SK-N-SH (cell line): ENCODE measurements at regions of chr19 and their contacts with region 1.

Region 1: DNA sequence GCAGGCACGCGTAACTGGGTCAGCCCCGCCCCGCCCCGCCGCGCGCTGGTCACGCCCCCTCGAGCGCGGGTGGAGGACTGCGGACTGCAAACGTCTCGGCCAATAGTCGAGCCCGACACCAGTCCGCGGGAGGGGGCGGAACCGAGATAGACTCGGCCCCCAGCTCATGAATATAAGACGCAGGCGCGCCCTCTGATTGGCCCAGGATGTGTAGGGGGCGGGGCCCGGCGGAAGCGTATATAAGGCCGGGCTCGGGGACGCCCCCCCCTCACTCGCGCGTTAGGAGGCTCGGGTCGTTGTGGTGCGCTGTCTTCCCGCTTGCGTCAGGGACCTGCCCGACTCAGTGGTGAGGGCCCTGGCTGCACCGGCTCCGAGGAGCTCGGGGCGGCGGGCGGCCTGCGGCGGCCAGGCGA is at the start of gene CIRBP:
- DNase-seq: peak; percentile 97
- H3K4me3 ChIP-seq: peak within 1 kb of the TSS; percentile 78 to 86
- H3K27ac ChIP-seq: peak within 1 kb of the TSS; percentile 91 to 98
- H3K4me1 ChIP-seq: peaks cover 47 to 62% of the 10 kb centered on the region in 2 experiments; a peak in 3 of 4 replicates
- H3K27me3 ChIP-seq: no peaks in the 10 kb centered on the region
- CTCF ChIP-seq: no peak
- EP300 ChIP-seq: no peak
- RAD21 ChIP-seq: no peak
- polyA plus RNA-seq, gene CIRBP: 762 and 857 TPM in 2 replicates

Region 2: GRCh38 chr19:1064661-1065605 is 204.1 kb before region 1 on chr19:
- CTCF ChIA-PET with region 1: no interaction called
- POLR2A ChIA-PET with region 1: no interaction called
- DNase-seq: peak; percentile 88
- H3K4me3 ChIP-seq: no peak overlapping the region
- H3K27ac ChIP-seq: no peak overlapping the region
- H3K4me1 ChIP-seq: peaks cover 0 to 20% of the 10 kb centered on the region in 2 experiments; a peak in 1 of 4 replicates
- H3K27me3 ChIP-seq: peaks cover 26% of the 10 kb centered on the region
- CTCF ChIP-seq: peak; percentile 55
- EP300 ChIP-seq: no peak
- RAD21 ChIP-seq: peak; percentile 42

Region 3: GRCh38 chr19:1223018-1223855 is 45.8 kb before region 1 on chr19:
- CTCF ChIA-PET with region 1: interaction called, 12 read pairs
- POLR2A ChIA-PET with region 1: interaction called, 4 read pairs
- DNase-seq: peak; percentile 76
- H3K4me3 ChIP-seq: no peak overlapping the region; a peak in 1 of 4 replicates
- H3K27ac ChIP-seq: no peak overlapping the region; a peak in 1 of 4 replicates
- H3K4me1 ChIP-seq: peaks cover 0 to 5% of the 10 kb centered on the region in 2 experiments; a peak in 1 of 4 replicates
- H3K27me3 ChIP-seq: no peaks in the 10 kb centered on the region
- CTCF ChIP-seq: peak; percentile 61
- EP300 ChIP-seq: no peak
- RAD21 ChIP-seq: peak; percentile 39; the same call in 1 of the 2 replicates

Region 4: GRCh38 chr19:1249298-1249989 is 19.6 kb before region 1 on chr19:
- CTCF ChIA-PET with region 1: interaction called, 594 read pairs
- POLR2A ChIA-PET with region 1: interaction called, 110 read pairs
- DNase-seq: peak; percentile 92
- H3K4me3 ChIP-seq: peak overlapping the region; percentile 79 to 88
- H3K27ac ChIP-seq: peak overlapping the region; percentile 95 to 96
- H3K4me1 ChIP-seq: peaks cover 15 to 38% of the 10 kb centered on the region in 2 experiments; a peak in 3 of 4 replicates
- H3K27me3 ChIP-seq: no peaks in the 10 kb centered on the region
- CTCF ChIP-seq: no peak
- EP300 ChIP-seq: no peak
- RAD21 ChIP-seq: no peak

Region 5: DNA sequence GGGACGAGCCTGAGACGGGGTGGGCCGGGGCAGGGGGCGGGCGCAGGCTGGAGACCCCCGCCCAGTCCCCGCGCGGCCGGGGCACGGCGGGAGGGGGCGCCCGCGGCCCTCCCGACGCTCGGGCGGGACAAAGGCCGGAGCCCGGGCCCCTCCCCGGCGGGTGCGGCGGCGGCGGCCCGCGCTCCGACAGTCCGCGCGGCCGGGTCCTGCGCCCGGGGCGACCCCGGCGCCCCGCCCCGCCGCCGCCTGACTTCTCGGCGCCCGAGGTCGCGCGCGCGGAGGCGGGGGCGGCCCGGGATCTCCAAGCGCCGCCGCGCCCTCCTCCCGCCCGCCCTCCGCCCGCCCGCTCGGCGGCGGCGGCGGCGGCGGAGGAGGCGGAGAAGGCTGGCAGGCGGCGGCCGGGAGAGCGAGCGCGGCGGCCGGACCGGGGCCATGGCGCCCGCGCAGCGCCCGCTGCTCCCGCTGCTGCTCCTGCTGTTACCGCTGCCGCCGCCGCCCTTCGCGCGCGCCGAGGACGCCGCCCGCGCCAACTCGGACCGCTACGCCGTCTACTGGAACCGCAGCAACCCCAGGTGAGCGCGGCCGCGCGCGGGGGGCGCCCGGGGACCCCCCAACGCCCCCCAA is 16.8 kb after region 1 on chr19 and contains the start of gene EFNA2:
- CTCF ChIA-PET with region 1: interaction called, 26 read pairs
- POLR2A ChIA-PET with region 1: interaction called, 10 read pairs
- DNase-seq: peak; percentile 84
- H3K4me3 ChIP-seq: peak within 1 kb of the TSS; percentile 57 to 63
- H3K27ac ChIP-seq: no peak within 1 kb of the TSS; a peak in 1 of 4 replicates
- H3K4me1 ChIP-seq: peaks cover 0 to 8% of the 10 kb centered on the region in 2 experiments; a peak in 1 of 4 replicates
- H3K27me3 ChIP-seq: no peaks in the 10 kb centered on the region
- CTCF ChIP-seq: peak; percentile 1; the same call in 1 of the 2 replicates
- EP300 ChIP-seq: no peak
- RAD21 ChIP-seq: no peak
- polyA plus RNA-seq, gene EFNA2: 0.67 and 1.1 TPM in 2 replicates

Region 6: DNA sequence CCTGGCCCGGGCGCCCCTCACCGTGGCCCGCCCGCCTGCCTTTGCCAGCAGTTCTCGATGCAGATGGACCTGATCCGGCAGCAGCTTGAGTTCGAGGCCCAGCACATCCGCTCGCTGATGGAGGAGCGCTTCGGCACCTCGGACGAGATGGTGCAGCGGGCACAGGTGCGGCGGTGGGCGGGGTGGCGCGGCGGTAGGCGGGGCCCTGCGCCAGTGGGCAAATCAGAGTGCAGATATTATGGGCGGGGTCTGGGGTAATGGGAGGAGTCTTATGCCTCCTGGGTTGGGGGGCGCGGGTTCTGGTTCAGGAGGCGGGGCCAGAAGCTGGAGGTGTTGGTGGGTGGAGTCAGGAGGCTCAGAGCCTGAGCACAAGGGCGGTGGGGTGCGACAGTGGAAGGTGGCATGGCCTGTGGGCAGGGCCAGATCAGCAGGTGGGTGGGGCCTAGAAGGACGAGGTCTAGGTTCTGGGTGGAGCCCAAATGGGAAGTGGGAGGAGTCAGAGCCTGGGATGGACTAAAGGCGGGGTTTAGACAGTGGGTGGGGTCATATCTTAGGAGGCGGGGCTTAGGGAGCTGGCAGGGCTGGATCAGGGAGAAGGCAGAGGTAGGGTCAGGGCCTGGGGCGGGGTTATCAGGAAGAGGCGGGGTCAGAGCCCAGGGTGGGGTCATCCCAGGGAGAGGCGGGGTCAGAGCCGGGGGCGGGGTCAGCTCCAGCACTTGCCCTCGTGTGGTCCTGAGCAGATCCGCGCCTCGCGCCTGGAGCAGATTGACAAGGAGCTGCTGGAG is 186.5 kb after region 1 on chr19:
- CTCF ChIA-PET with region 1: interaction called, 6 read pairs
- POLR2A ChIA-PET with region 1: interaction called, 10 read pairs
- DNase-seq: peak; percentile 94
- H3K4me3 ChIP-seq: no peak overlapping the region
- H3K27ac ChIP-seq: no peak overlapping the region; a peak in 1 of 4 replicates
- H3K4me1 ChIP-seq: peaks cover 0 to 26% of the 10 kb centered on the region in 2 experiments; a peak in 1 of 4 replicates
- H3K27me3 ChIP-seq: no peaks in the 10 kb centered on the region
- CTCF ChIP-seq: no peak
- EP300 ChIP-seq: no peak
- RAD21 ChIP-seq: no peak